ENCODE measurements at regions of chr1 and their contacts with region 1.

Region 1: GRCh38 chr1:231337472-231338269 is at the start of gene EXOC8:
- DNase-seq: peak; percentile 98
- H3K4me3 Mint-ChIP-seq: peak within 1 kb of the TSS; percentile 97
- H3K27ac Mint-ChIP-seq: peak within 1 kb of the TSS; percentile 98
- H3K4me1 Mint-ChIP-seq: peaks cover 62% of the 10 kb centered on the region
- H3K27me3 Mint-ChIP-seq: peaks cover 2% of the 10 kb centered on the region
- total RNA-seq, gene EXOC8: 21.9 to 22.7 TPM

Region 2: GRCh38 chr1:231240883-231241735 is 96.6 kb before region 1 on chr1 and contains the start of gene GNPAT:
- CTCF ChIA-PET with region 1: interaction called, 9 read pairs
- POLR2A ChIA-PET with region 1: interaction called, 36 read pairs
- DNase-seq: peak; percentile 91
- H3K4me3 Mint-ChIP-seq: peak within 1 kb of the TSS; percentile 85
- H3K27ac Mint-ChIP-seq: peak within 1 kb of the TSS; percentile 83
- H3K4me1 Mint-ChIP-seq: peaks cover 50% of the 10 kb centered on the region
- H3K27me3 Mint-ChIP-seq: no peaks in the 10 kb centered on the region
- total RNA-seq, gene GNPAT: 44.6 to 45.2 TPM

Region 3: GRCh38 chr1:231348442-231348841 is 10.8 kb after region 1 on chr1:
- CTCF ChIA-PET with region 1: interaction called, 4 read pairs
- POLR2A ChIA-PET with region 1: interaction called, 12 read pairs
- DNase-seq: no peak
- H3K4me3 Mint-ChIP-seq: no peak overlapping the region
- H3K27ac Mint-ChIP-seq: no peak overlapping the region
- H3K4me1 Mint-ChIP-seq: peaks cover 2% of the 10 kb centered on the region
- H3K27me3 Mint-ChIP-seq: no peaks in the 10 kb centered on the region

Region 4: GRCh38 chr1:231357831-231358354 is 20.2 kb after region 1 on chr1:
- CTCF ChIA-PET with region 1: interaction called, 13 read pairs
- POLR2A ChIA-PET with region 1: interaction called, 4 read pairs
- DNase-seq: peak; percentile 33
- H3K4me3 Mint-ChIP-seq: no peak overlapping the region
- H3K27ac Mint-ChIP-seq: no peak overlapping the region
- H3K4me1 Mint-ChIP-seq: peaks cover 6% of the 10 kb centered on the region
- H3K27me3 Mint-ChIP-seq: no peaks in the 10 kb centered on the region

Region 5: DNA sequence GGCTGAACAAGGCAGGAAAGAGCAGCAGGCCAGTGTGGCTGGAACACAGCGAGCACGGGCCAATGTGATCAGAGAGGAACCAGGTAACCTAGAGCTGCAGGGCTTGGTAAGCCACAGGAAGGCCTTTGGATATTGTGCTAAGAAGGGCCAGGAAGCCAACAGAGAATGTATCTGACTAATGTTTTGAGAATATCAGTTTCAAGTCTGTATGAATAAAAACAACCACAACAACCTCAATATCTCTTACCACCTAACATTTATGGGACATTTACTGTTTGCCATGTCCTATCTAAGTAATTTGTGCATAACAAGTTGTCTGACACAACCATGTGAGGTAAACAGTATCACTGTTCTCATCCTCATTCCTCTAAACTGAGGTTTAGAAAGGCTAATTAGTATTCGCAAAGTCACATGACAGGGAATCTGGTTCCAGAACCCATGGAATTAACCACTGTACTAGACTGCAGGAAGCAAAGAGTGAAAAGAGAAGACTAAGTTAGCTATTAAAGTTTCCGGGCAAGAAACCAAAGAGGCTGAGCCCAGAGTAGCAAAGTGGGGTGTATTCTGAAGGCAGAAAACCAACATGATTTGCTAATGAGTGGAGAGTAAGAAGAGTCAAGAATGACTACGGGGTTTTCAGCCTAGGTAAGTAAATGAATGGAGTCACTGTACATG is 39.3 kb after region 1 on chr1:
- CTCF ChIA-PET with region 1: no interaction called
- POLR2A ChIA-PET with region 1: no interaction called
- DNase-seq: peak; percentile 34
- H3K4me3 Mint-ChIP-seq: no peak overlapping the region
- H3K27ac Mint-ChIP-seq: peak overlapping the region; percentile 44
- H3K4me1 Mint-ChIP-seq: peaks cover 30% of the 10 kb centered on the region
- H3K27me3 Mint-ChIP-seq: no peaks in the 10 kb centered on the region

Region 6: DNA sequence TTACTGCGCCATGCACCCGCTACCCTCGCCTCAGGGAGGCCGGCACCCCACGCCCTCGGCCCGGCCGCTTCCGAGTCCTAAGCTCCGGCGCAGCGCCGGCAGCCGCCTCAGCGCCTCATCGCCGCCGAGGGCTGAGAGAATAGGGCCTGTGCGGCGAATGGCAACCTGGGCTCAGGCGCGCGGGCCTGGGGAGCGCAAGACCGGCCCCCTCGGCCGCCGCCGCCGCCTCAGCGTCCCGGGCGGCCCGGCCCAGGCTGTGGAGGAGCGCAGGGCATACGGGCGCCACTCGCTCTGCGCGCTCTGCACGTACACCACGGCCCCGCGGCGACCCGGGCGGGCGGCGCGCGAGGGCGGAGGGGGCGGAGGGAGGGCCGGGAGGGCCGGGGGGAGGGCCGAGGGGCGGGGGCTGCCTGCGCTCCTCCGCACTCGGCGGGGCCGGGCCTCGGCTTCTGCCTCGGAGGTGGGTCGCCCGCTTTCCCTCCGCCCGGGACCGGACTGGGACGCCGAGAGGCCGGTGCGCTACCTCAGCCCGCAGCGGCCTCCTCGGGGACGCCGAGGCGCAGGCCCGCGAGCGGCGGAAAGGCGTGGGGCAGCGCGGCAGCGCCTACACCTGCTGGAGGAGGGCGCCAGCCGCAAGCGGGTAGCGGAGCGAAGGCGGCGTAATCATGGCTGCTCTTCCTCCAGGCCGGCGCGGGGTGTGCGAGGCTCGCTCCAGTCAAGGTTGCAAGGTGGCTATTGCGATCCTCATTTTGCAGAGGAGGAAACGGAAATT is 84.5 kb after region 1 on chr1 and contains the start of gene EGLN1:
- CTCF ChIA-PET with region 1: interaction called, 19 read pairs
- POLR2A ChIA-PET with region 1: interaction called, 64 read pairs
- DNase-seq: peak; percentile 87
- H3K4me3 Mint-ChIP-seq: peak within 1 kb of the TSS; percentile 92
- H3K27ac Mint-ChIP-seq: peak within 1 kb of the TSS; percentile 90
- H3K4me1 Mint-ChIP-seq: peaks cover 36% of the 10 kb centered on the region
- H3K27me3 Mint-ChIP-seq: peaks cover 19% of the 10 kb centered on the region
- total RNA-seq, gene EGLN1: 38.8 to 38.9 TPM

Region 7: DNA sequence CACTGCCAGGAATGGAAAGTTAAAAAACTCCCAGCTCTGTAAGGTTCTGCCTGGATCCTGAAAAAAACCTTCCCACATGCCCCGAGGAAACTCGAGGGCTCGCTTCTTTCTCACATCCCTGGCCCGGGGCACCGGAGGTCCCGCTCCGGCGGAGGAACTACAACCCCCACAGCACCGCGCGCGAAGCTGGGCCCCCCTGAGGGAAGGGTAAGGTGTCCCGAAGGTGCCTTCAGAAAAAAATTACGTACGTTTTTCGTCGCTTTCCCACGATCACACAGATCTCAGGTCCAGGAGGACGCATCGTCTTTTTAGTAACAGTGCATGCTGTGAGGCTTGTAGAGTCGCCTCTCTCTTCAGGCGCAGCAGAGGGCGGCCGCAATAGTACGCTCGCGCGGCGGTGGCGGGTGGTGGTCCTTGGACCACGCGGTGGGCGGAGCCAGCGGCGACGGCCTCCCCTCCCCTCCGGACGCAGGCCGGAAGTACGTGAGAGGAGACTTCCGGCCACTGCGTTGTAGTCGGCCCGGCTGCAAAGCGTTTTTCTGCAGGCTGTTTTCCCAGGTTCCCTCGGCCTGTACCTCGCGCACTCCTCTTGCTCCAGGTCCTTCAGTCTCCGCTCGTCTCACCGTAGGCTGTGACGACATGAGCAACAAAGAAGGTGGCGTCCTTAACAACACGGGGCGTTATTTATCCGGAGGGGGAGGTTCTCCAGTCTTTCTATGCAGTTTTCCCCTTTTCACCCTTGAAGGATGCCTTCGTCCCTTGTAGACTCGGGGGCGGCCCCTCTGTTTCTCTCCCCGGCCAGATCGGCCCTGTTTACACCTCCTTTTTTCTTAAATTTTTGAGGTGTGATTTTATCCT is 190.7 kb after region 1 on chr1 and contains the start of gene TSNAX:
- CTCF ChIA-PET with region 1: interaction called, 4 read pairs
- POLR2A ChIA-PET with region 1: interaction called, 21 read pairs
- DNase-seq: peak; percentile 91
- H3K4me3 Mint-ChIP-seq: peak within 1 kb of the TSS; percentile 93
- H3K27ac Mint-ChIP-seq: peak within 1 kb of the TSS; percentile 95
- H3K4me1 Mint-ChIP-seq: peaks cover 39% of the 10 kb centered on the region
- H3K27me3 Mint-ChIP-seq: no peaks in the 10 kb centered on the region
- total RNA-seq, gene TSNAX: 44.4 to 48.7 TPM

Region 8: GRCh38 chr1:231612393-231613089 is 274.9 kb after region 1 on chr1:
- CTCF ChIA-PET with region 1: interaction called, 5 read pairs
- POLR2A ChIA-PET with region 1: interaction called, 10 read pairs
- DNase-seq: peak; percentile 81
- H3K4me3 Mint-ChIP-seq: peak overlapping the region; percentile 56
- H3K27ac Mint-ChIP-seq: peak overlapping the region; percentile 94
- H3K4me1 Mint-ChIP-seq: peaks cover 46% of the 10 kb centered on the region
- H3K27me3 Mint-ChIP-seq: peaks cover 7% of the 10 kb centered on the region